ENCODE measurements at regions of chr15 and their contacts with region 1.

Region 1: GRCh38 chr15:80455668-80456442 is 51.7 kb downstream of the ARNT2 start:
- DNase-seq: peak in 1 of 2 experiments; percentile 61
- H3K4me3 ChIP-seq: no peak overlapping the region
- H3K27ac ChIP-seq: no peak overlapping the region
- H3K4me1 ChIP-seq: peaks cover 0 to 9% (median 4%) of the 10 kb centered on the region in 4 experiments; a peak in 4 of 7 replicates
- H3K27me3 ChIP-seq: peaks cover 0 to 2% (median 0%) of the 10 kb centered on the region in 4 experiments; a peak in 1 of 7 replicates
- CTCF ChIP-seq: peak; percentile 90 to 94 (median 91)
- EP300 ChIP-seq: no peak
- POLR2A ChIP-seq: no peak
- RAD21 ChIP-seq: peak; percentile 97

Region 2: DNA sequence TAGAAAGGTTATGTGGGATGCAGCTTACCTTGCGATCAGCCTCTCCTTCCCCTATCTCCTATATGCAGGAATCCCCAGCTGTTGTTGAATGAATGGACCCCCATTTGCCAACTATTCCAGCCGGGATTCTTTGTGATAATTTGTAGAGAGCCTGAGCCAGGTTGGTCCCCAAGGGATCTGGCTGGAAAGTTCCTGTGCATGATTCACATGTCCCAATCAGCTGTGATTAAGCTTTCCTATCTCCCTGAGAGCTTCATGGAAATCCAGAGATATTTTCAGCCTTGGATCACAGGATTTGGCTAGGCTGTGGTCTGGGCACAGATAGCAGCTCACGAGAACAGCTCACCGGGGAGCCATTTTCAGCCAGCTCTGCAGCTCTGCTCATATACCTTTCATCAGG is 25.1 kb after region 1 on chr15:
- CTCF ChIA-PET with region 1: interaction called, 187 read pairs
- POLR2A ChIA-PET with region 1: interaction called, 3 read pairs
- DNase-seq: no peak
- H3K4me3 ChIP-seq: no peak overlapping the region
- H3K27ac ChIP-seq: peak overlapping the region; percentile 17; the same call in 1 of the 2 replicates
- H3K4me1 ChIP-seq: peaks cover 0 to 12% (median 10%) of the 10 kb centered on the region in 4 experiments; a peak in 6 of 7 replicates
- H3K27me3 ChIP-seq: no peaks in the 10 kb centered on the region
- CTCF ChIP-seq: no peak
- EP300 ChIP-seq: no peak
- POLR2A ChIP-seq: no peak
- RAD21 ChIP-seq: no peak

Region 3: GRCh38 chr15:80567721-80568157 is 111.9 kb after region 1 on chr15:
- CTCF ChIA-PET with region 1: interaction called, 56 read pairs
- POLR2A ChIA-PET with region 1: no interaction called
- DNase-seq: peak in 1 of 2 experiments; percentile 59
- H3K4me3 ChIP-seq: no peak overlapping the region
- H3K27ac ChIP-seq: no peak overlapping the region
- H3K4me1 ChIP-seq: peaks cover 0 to 13% (median 3%) of the 10 kb centered on the region in 4 experiments; a peak in 4 of 7 replicates
- H3K27me3 ChIP-seq: no peaks in the 10 kb centered on the region
- CTCF ChIP-seq: peak; percentile 30 to 98 (median 91)
- EP300 ChIP-seq: no peak
- POLR2A ChIP-seq: no peak
- RAD21 ChIP-seq: peak; percentile 90 to 93

Region 4: DNA sequence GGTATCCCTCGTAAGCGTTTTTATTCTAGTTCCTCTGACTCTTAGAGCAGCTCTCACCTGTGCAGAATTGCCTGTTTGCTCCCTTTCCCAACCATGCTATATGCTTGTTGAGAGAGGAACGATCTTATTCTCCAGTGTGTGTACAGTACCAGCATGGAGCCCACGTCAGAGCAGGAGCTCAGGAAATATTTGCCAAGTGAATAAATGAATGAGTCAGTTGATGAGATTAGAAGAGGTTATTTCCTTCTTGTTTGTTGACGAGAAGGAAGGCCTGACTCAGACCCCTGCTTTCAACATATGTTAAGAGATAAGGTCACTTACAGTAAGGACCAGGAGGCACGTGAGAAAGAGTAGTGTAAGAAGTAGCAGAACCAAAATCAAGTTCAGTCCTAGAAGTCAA is 132.9 kb after region 1 on chr15:
- CTCF ChIA-PET with region 1: interaction called, 15 read pairs
- POLR2A ChIA-PET with region 1: no interaction called
- DNase-seq: no peak
- H3K4me3 ChIP-seq: no peak overlapping the region
- H3K27ac ChIP-seq: no peak overlapping the region
- H3K4me1 ChIP-seq: peaks cover 0 to 6% (median 5%) of the 10 kb centered on the region in 4 experiments; a peak in 4 of 7 replicates
- H3K27me3 ChIP-seq: no peaks in the 10 kb centered on the region
- CTCF ChIP-seq: no peak
- EP300 ChIP-seq: no peak
- POLR2A ChIP-seq: no peak
- RAD21 ChIP-seq: no peak